SK-N-SH (cell line): ENCODE measurements at regions of chr1 and their contacts with region 1.

Region 1: DNA sequence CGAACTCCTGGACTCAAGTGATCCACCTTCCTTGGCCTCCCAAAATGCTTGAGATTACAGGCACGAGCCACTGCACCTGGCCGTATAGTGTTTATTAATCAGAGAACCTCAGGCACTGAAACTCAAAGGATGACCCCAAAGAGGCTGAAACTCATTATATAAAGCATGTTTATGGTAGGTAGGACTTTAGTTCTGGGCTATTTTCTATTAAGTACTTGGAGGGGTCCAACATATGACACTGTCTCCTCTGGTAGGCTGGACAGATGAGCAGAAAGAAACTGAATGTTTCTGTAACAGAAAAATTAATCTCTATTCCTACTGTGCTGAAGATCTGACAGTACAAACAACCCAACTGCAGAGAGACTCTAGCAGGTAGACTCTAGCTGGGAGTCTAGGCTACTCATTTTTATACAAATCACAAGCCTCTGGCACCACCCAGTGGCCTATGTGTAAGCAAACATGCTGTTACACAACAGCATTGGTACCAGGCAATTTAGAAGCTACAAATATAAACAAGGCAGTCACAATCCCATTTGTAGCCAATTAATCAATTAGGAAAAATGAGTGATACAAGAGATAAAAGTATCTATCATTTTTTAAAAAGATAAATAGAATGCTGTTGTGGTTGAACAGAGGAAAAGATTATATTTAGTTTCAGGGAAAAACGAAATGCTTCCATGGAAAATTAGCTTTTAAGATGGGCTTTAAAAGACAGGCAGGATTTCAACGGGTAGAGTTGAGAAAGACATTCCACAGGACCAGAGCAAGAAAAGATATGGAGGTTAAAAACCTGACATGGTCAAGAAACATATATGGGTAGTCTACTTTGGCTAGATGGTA is 10.4 kb downstream of the DCAF8 start:
- DNase-seq: peak; percentile 68
- H3K4me3 ChIP-seq: no peak overlapping the region
- H3K27ac ChIP-seq: no peak overlapping the region
- H3K4me1 ChIP-seq: peaks cover 0 to 17% of the 10 kb centered on the region in 2 experiments; a peak in 2 of 4 replicates
- H3K27me3 ChIP-seq: no peaks in the 10 kb centered on the region
- CTCF ChIP-seq: peak; percentile 84
- EP300 ChIP-seq: no peak
- RAD21 ChIP-seq: peak; percentile 92

Region 2: GRCh38 chr1:160108888-160109662 is 142.8 kb before region 1 on chr1:
- CTCF ChIA-PET with region 1: interaction called, 29 read pairs
- POLR2A ChIA-PET with region 1: no interaction called
- DNase-seq: peak; percentile 63
- H3K4me3 ChIP-seq: no peak overlapping the region
- H3K27ac ChIP-seq: no peak overlapping the region
- H3K4me1 ChIP-seq: peaks cover 0 to 9% of the 10 kb centered on the region in 2 experiments; a peak in 1 of 4 replicates
- H3K27me3 ChIP-seq: 0 out of 2 replicates have a peak, but pooled peaks cover 3% of the 10 kb centered on the region
- CTCF ChIP-seq: peak; percentile 64
- EP300 ChIP-seq: no peak
- RAD21 ChIP-seq: no peak

Region 3: GRCh38 chr1:160129046-160129445 is 122.9 kb before region 1 on chr1:
- CTCF ChIA-PET with region 1: interaction called, 11 read pairs
- POLR2A ChIA-PET with region 1: no interaction called
- DNase-seq: no peak
- H3K4me3 ChIP-seq: no peak overlapping the region
- H3K27ac ChIP-seq: no peak overlapping the region
- H3K4me1 ChIP-seq: peaks cover 0 to 8% of the 10 kb centered on the region in 2 experiments; a peak in 1 of 4 replicates
- H3K27me3 ChIP-seq: 0 out of 2 replicates have a peak, but pooled peaks cover 4% of the 10 kb centered on the region
- CTCF ChIP-seq: no peak
- EP300 ChIP-seq: no peak
- RAD21 ChIP-seq: no peak

Region 4: DNA sequence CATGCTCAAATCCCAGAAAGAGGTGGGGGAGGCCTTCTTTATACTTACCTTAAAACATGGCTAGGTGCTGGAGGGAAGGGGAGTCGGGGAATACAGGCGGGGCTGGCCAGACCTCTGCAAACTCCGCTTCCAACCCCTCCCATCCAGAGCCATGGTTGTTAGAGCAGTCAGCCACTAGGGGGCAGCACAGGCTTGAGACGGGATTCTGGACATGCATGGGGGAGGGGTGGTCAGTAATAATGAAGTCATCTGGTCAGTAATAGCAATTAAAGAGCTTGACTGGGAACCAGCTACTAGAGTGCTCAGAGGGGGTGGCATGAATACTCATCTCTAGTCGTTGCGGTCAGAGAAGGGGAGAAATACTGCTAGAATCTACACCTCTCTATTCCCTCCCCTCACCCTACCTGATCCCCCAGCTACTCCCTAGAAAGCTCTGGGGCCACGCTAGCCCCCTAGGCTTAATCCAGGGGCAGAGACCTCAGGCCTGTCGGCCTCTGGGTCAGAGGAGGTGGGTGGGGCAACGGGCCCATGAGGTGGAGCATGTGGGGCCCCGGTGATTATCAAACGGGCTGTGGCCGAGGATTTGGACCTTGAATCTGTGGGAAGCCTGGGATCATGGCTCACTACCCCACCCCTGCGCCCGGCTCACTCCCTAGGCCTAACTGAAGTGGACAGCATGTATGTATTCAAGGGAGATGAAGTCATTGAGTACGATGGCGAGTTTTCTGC is 58.7 kb before region 1 on chr1:
- CTCF ChIA-PET with region 1: interaction called, 293 read pairs
- POLR2A ChIA-PET with region 1: interaction called, 3 read pairs
- DNase-seq: peak; percentile 80
- H3K4me3 ChIP-seq: peak overlapping the region in 1 of 2 experiments; percentile 25; a peak in 1 of 4 replicates
- H3K27ac ChIP-seq: peak overlapping the region in 1 of 2 experiments; percentile 11; a peak in 1 of 4 replicates
- H3K4me1 ChIP-seq: peaks cover 3 to 5% of the 10 kb centered on the region in 2 experiments; a peak in 2 of 4 replicates
- H3K27me3 ChIP-seq: no peaks in the 10 kb centered on the region
- CTCF ChIP-seq: peak; percentile 96
- EP300 ChIP-seq: peak in 1 of 2 experiments; percentile 22; a peak in 1 of 4 replicates
- RAD21 ChIP-seq: peak; percentile 98

Region 5: DNA sequence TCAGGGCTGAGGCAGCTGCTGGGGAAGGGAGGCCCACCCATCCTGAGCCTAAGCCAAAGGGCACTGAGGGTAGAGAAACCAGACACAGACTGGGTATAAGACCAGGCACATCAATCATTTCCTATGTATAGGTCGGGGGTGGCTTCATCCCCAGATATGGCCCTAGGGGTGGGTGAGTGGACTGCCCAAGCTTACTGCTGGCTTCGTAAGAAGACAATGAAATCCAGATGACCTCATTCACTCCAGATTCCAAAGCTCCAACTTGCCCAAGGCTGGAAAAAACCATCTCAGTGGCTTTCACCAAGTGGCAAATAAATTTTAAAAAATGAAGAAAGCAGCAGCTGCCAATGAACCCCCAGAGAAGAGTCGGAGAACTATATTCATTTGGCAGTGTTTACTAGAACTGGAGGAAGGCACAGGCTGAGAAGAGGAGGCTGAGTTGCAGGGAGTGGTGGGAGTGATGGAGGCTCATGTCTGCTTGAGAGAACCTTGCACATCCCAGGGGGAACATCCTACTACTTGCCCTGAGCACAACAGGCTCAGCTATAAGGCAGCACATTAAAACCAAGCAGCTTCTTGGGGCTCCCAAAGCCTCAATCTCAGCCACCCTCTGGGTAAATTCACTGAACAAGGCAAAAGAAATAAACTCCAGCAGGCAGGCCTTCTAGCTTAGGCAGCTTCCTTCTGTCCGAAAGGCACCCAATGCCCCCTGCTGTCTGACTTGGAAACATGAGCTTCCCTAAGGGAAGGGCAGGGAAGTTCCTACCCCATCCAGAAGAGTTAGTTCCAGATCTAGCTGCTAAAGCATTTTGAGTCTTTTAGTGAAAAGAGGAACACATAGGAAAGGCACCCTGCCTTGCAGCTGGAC is 32.6 kb before region 1 on chr1:
- CTCF ChIA-PET with region 1: interaction called, 73 read pairs
- POLR2A ChIA-PET with region 1: interaction called, 4 read pairs
- DNase-seq: peak; percentile 55
- H3K4me3 ChIP-seq: no peak overlapping the region; a peak in 1 of 4 replicates
- H3K27ac ChIP-seq: peak overlapping the region; percentile 31 to 55
- H3K4me1 ChIP-seq: peaks cover 11 to 18% of the 10 kb centered on the region in 2 experiments; a peak in 3 of 4 replicates
- H3K27me3 ChIP-seq: no peaks in the 10 kb centered on the region
- CTCF ChIP-seq: peak; percentile 72
- EP300 ChIP-seq: no peak
- RAD21 ChIP-seq: peak; percentile 81

Region 6: GRCh38 chr1:160232911-160233310 is 19.0 kb before region 1 on chr1:
- CTCF ChIA-PET with region 1: interaction called, 29 read pairs
- POLR2A ChIA-PET with region 1: no interaction called
- DNase-seq: no peak
- H3K4me3 ChIP-seq: no peak overlapping the region
- H3K27ac ChIP-seq: no peak overlapping the region
- H3K4me1 ChIP-seq: no peaks in the 10 kb centered on the region
- H3K27me3 ChIP-seq: no peaks in the 10 kb centered on the region
- CTCF ChIP-seq: no peak
- EP300 ChIP-seq: no peak
- RAD21 ChIP-seq: no peak

Region 7: DNA sequence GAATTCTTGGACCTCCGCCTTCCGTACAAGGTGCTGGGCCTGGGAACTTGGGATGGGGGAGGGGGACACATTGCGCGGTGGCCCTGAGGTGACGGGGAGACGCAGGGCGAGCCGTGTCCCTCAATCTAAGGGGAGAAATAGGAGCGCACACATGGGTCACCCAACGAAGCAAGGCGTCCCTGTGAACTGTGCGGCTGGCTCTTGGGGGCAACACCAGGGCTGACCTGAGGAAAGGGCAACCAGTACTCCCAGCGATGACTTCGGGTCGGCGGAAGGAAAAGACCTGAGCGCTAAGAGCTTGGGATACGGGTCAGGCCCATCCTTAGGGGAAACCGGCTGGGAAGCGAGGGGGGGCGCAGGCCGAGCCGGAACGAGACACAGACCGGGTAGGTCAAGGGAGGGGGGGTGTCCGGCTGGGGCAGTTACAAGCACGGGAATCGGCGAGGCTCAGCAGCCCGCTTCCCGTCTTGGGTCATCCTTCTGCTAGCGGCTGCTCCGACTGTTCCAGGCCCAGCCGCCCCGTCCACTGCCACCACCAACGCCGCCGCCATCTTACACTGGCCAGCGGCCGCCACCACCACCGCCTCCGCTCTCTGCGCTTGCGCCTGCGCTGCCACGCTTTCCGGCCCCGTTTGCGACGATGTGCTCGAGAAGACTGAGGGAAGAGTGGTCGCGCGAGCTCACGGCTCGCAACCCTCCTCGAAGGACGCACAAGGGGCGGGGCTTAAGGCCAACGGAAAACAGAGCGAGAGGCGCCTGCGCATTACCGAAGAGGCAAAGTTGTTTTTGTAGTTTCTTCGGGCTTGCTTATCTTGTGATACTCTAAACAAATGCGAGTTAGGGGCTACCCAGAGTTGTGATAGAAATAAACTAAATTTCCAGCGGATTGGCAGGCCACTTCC is 10.2 kb after region 1 on chr1 and contains the start of gene DCAF8:
- CTCF ChIA-PET with region 1: interaction called, 48 read pairs
- POLR2A ChIA-PET with region 1: interaction called, 4 read pairs
- DNase-seq: peak; percentile 94
- H3K4me3 ChIP-seq: peak within 1 kb of the TSS; percentile 93 to 95
- H3K27ac ChIP-seq: peak within 1 kb of the TSS; percentile 96
- H3K4me1 ChIP-seq: peaks cover 12 to 18% of the 10 kb centered on the region in 2 experiments
- H3K27me3 ChIP-seq: no peaks in the 10 kb centered on the region
- CTCF ChIP-seq: no peak
- EP300 ChIP-seq: no peak
- RAD21 ChIP-seq: no peak
- polyA plus RNA-seq, gene DCAF8: 108 and 150 TPM in 2 replicates

Region 8: DNA sequence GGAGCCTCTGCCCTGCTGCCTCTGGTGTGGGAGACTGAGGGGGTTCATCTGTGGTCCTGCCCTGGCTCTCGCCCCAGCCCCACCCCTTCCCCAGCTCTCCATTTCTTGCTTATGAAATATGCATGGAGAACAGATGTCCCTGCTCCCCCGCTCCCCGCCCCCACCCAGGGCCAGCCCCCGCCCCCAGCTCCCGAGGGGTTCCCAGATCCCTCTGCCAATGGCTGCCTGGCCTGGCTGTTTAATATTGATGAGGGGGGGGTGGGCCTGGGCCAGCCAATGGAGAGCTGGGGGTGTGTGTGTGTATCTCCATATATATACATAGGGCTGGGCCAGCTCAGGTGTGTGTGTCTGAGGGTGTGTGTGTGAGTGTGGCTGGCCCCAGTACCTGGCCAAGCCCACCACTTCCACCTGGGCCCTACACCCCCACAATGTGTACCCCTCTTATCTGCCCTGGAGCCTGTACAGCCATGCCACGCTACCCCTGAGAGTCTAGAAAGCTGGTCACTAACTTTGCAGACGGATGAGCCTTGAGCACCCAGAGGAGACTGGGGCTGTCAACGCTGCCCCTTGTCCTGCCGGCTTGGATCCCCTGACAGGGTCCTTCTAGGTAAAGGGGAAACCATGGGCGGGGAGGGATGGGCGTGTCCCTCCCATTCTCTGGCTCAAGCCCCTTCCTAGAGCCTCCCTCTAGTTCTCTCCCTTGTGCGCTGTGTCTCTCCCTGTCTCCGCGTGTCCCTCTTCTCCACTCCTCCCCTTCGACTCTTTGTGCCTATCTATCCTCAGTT is 115.0 kb after region 1 on chr1 and contains the start of gene NHLH1:
- CTCF ChIA-PET with region 1: no interaction called
- POLR2A ChIA-PET with region 1: no interaction called
- DNase-seq: peak; percentile 60
- H3K4me3 ChIP-seq: no peak within 1 kb of the TSS
- H3K27ac ChIP-seq: no peak within 1 kb of the TSS
- H3K4me1 ChIP-seq: no peaks in the 10 kb centered on the region
- H3K27me3 ChIP-seq: no peaks in the 10 kb centered on the region
- CTCF ChIP-seq: no peak
- EP300 ChIP-seq: no peak
- RAD21 ChIP-seq: no peak
- polyA plus RNA-seq, gene NHLH1: 0.16 and 0.18 TPM in 2 replicates